ENCODE measurements at regions of chr2 and their contacts with region 1.

Region 1: GRCh38 chr2:101047075-101047766 is 45.1 kb downstream of the RPL31 start:
- DNase-seq: peak; percentile 97
- H3K4me3 Mint-ChIP-seq: no peak overlapping the region
- H3K27ac Mint-ChIP-seq: peak overlapping the region; percentile 91
- H3K4me1 Mint-ChIP-seq: peaks cover 13% of the 10 kb centered on the region
- H3K27me3 Mint-ChIP-seq: no peaks in the 10 kb centered on the region
- CTCF ChIP-seq: no peak

Region 2: DNA sequence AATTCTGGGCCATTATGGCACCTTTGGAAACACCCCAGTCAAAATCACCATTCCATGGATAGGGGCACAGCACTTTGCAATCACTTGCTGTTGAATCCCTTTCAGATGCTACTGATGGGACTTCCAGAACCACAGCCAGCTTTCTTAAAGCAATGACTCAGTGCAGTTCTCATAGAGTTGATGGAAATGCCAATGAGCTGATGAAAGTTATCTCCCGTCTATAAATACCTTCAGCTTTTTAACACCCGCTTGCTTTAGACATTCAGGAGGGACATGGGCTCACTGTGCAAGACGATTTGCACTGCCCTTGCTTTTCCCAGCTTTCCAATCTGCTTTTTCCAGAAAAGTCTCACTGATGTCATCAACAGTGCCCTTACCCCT is 111.9 kb before region 1 on chr2:
- CTCF ChIA-PET with region 1: no interaction called
- POLR2A ChIA-PET with region 1: no interaction called
- intact Hi-C with region 1: no loop called
- DNase-seq: no peak
- H3K4me3 Mint-ChIP-seq: no peak overlapping the region
- H3K27ac Mint-ChIP-seq: no peak overlapping the region
- H3K4me1 Mint-ChIP-seq: no peaks in the 10 kb centered on the region
- H3K27me3 Mint-ChIP-seq: no peaks in the 10 kb centered on the region
- CTCF ChIP-seq: no peak

Region 3: GRCh38 chr2:100959225-100959880 is 87.9 kb before region 1 on chr2:
- CTCF ChIA-PET with region 1: no interaction called
- POLR2A ChIA-PET with region 1: no interaction called
- intact Hi-C with region 1: no loop called
- DNase-seq: no peak
- H3K4me3 Mint-ChIP-seq: no peak overlapping the region
- H3K27ac Mint-ChIP-seq: no peak overlapping the region
- H3K4me1 Mint-ChIP-seq: no peaks in the 10 kb centered on the region
- H3K27me3 Mint-ChIP-seq: no peaks in the 10 kb centered on the region
- CTCF ChIP-seq: no peak

Region 4: GRCh38 chr2:101036562-101037457 is 10.4 kb before region 1 on chr2:
- CTCF ChIA-PET with region 1: interaction called, 22 read pairs
- POLR2A ChIA-PET with region 1: interaction called, 3 read pairs
- intact Hi-C with region 1: no loop called
- DNase-seq: peak; percentile 35
- H3K4me3 Mint-ChIP-seq: no peak overlapping the region
- H3K27ac Mint-ChIP-seq: no peak overlapping the region
- H3K4me1 Mint-ChIP-seq: peaks cover 5% of the 10 kb centered on the region
- H3K27me3 Mint-ChIP-seq: no peaks in the 10 kb centered on the region
- CTCF ChIP-seq: peak; percentile 53

Region 5: GRCh38 chr2:101223814-101224231 is 176.6 kb after region 1 on chr2:
- CTCF ChIA-PET with region 1: no interaction called
- POLR2A ChIA-PET with region 1: no interaction called
- intact Hi-C with region 1: no loop called
- DNase-seq: no peak
- H3K4me3 Mint-ChIP-seq: no peak overlapping the region
- H3K27ac Mint-ChIP-seq: no peak overlapping the region
- H3K4me1 Mint-ChIP-seq: no peaks in the 10 kb centered on the region
- H3K27me3 Mint-ChIP-seq: no peaks in the 10 kb centered on the region
- CTCF ChIP-seq: no peak